Esophagus muscularis mucosa (tissue), 4 donors: ENCODE measurements at regions of chr10 and their contacts with region 1.

Region 1: GRCh38 chr10:97355571-97355975 is 21.0 kb upstream of the FRAT2 start:
- DNase-seq: no peak
- H3K4me3 ChIP-seq: no peak overlapping the region
- H3K27ac ChIP-seq: no peak overlapping the region
- H3K4me1 ChIP-seq: peaks cover 0 to 14% (median 12%) of the 10 kb centered on the region in 4 donors
- H3K27me3 ChIP-seq: no peaks in the 10 kb centered on the region
- CTCF ChIP-seq: peak; percentile 49 to 61 (median 54)
- EP300 ChIP-seq: no peak
- POLR2A ChIP-seq: no peak

Region 2: GRCh38 chr10:97250952-97251351 is 104.6 kb before region 1 on chr10:
- intact Hi-C with region 1: no loop called
- DNase-seq: no peak
- H3K4me3 ChIP-seq: no peak overlapping the region
- H3K27ac ChIP-seq: no peak overlapping the region
- H3K4me1 ChIP-seq: no peaks in the 10 kb centered on the region
- H3K27me3 ChIP-seq: no peaks in the 10 kb centered on the region
- CTCF ChIP-seq: no peak
- EP300 ChIP-seq: no peak
- POLR2A ChIP-seq: no peak

Region 3: GRCh38 chr10:97278491-97278989 is 77.0 kb before region 1 on chr10:
- intact Hi-C with region 1: loop called (anchors 2 kb)
- DNase-seq: no peak
- H3K4me3 ChIP-seq: no peak overlapping the region
- H3K27ac ChIP-seq: peak overlapping the region; percentile 33 to 61 (median 48)
- H3K4me1 ChIP-seq: peaks cover 15 to 21% (median 19%) of the 10 kb centered on the region in 4 donors
- H3K27me3 ChIP-seq: no peaks in the 10 kb centered on the region
- CTCF ChIP-seq: peak; percentile 73 to 76 (median 74)
- EP300 ChIP-seq: no peak
- POLR2A ChIP-seq: no peak